ENCODE measurements at regions of chr9 and their contacts with region 1.

Region 1: GRCh38 chr9:112348257-112349007 is 15.0 kb upstream of the PTBP3 start:
- DNase-seq: peak in 1 of 2 experiments; percentile 51
- H3K4me3 ChIP-seq: peak overlapping the region in 3 of 4 experiments; percentile 15 to 25 (median 17); a peak in 2 of 8 replicates
- H3K27ac ChIP-seq: no peak overlapping the region
- H3K4me1 ChIP-seq: peaks cover 5 to 11% (median 8%) of the 10 kb centered on the region in 4 experiments; a peak in 6 of 7 replicates
- H3K27me3 ChIP-seq: no peaks in the 10 kb centered on the region; a peak in 1 of 7 replicates
- CTCF ChIP-seq: no peak
- EP300 ChIP-seq: no peak
- POLR2A ChIP-seq: no peak
- RAD21 ChIP-seq: no peak

Region 2: DNA sequence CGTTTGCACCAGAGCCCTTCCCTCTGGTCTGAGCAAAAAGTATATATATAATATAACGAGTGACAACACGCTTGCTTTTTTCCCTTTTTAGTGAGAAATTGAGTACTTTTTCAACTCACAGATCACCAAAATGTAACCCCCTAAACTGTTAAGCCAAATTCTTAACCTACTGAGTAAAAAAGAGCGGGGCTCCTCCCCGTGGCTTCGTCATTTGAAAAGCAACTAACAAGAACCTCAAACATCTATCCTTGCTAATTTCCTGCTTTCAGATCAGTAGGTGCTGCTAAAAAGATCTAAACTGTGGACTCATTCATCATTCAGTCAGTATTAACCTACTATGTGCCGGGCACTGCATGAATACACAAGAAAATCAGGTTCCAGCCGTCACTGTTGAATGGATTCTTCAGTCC is 14.0 kb before region 1 on chr9:
- CTCF ChIA-PET with region 1: interaction called, 11 read pairs
- POLR2A ChIA-PET with region 1: interaction called, 5 read pairs
- DNase-seq: no peak
- H3K4me3 ChIP-seq: peak overlapping the region; percentile 46 to 74 (median 58); a peak in 5 of 8 replicates
- H3K27ac ChIP-seq: no peak overlapping the region
- H3K4me1 ChIP-seq: peaks cover 0 to 6% (median 0%) of the 10 kb centered on the region in 4 experiments; a peak in 3 of 7 replicates
- H3K27me3 ChIP-seq: no peaks in the 10 kb centered on the region
- CTCF ChIP-seq: no peak
- EP300 ChIP-seq: no peak
- POLR2A ChIP-seq: no peak
- RAD21 ChIP-seq: no peak

Measured in H1 (cell line).